ENCODE measurements at regions of chr20 and their contacts with region 1.

Region 1: DNA sequence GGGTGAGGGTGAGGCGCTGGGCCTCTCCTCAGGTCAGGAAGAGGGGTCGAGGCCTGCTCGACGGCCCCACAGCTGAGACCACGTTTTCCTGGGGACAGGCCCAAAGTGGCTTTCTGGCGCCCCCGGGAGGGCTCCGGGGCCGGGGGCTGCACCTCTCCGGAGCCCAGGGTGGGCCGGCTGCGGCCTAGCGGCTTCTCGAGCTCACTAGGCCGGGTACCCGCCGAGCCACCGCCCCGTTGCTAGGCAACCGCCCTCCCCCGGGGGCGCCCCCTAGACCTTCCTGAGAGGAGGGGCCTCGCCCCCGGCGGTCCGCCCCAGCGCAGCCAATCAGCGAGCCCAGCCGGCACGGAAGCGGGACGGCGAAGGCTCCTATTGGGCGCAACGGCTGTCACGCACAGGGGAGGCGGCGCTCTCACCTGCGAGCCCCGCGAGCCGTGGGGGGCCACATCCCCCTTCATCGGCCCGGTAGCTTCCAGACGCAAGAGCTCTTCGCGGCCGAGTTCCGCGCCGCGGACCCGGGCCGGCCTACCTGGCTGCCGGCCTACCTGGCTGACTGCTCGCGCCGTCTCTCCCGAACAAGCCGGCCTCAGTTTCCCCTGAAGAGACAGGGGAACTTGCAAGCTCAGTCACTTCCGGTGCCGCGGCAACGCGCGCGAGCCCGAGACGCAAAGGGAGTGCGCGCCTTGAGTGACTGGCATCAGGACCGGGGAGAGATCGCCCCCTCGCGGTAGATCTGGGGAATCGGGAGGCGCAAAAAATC is 831 bp upstream of the BCL2L1 start:
- DNase-seq: peak; percentile 99
- H3K4me3 ChIP-seq: peak overlapping the region; percentile 95
- H3K27ac ChIP-seq: peak overlapping the region; percentile 89
- H3K4me1 ChIP-seq: peaks cover 21% of the 10 kb centered on the region
- CTCF ChIP-seq: peak; percentile 93

Region 2: DNA sequence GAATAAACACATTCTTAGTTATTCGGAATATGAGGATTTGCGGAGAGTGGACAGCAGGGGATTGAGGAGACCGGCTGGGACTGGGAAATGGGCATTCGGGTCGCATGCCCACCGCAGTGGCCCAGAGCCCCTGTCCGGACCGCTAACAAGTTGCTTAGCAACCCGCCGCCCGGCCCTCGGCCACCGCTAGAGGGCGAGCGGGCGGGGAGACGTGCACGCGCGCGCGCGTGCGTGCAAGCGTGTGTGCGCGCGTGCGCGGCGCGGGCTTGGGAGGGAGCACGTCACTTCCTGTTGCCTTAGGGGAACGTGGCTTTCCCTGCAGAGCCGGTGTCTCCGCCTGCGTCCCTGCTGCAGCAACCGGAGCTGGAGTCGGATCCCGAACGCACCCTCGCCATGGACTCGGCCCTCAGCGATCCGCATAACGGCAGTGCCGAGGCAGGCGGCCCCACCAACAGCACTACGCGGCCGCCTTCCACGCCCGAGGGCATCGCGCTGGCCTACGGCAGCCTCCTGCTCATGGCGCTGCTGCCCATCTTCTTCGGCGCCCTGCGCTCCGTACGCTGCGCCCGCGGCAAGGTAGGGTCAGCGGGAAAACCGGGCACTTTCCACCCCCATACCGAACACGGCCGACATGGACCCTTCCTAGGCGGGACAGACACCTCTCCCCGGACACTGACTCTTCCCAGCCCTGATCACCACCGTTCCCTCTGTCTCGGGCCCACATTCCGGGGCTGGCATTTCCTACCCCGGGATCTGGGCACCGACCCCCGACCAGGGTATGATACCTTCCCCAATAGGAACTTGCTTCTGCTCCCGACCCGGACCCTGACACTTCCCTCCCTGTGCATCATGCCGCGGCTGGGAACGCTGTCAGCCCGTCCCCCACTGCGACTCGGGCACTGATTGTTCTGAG is 209.1 kb before region 1 on chr20 and contains the start of gene HM13:
- CTCF ChIA-PET with region 1: interaction called, 23 read pairs
- POLR2A ChIA-PET with region 1: no interaction called
- intact Hi-C with region 1: no loop called
- DNase-seq: peak; percentile 97
- H3K4me3 ChIP-seq: peak within 1 kb of the TSS; percentile 89
- H3K27ac ChIP-seq: peak within 1 kb of the TSS; percentile 12
- H3K4me1 ChIP-seq: peaks cover 16% of the 10 kb centered on the region
- CTCF ChIP-seq: peak; percentile 87
- total RNA-seq, gene HM13: 43.6 and 51.3 TPM in 2 replicates

Region 3: GRCh38 chr20:31630187-31630790 is 93.2 kb before region 1 on chr20:
- CTCF ChIA-PET with region 1: interaction called, 20 read pairs
- POLR2A ChIA-PET with region 1: interaction called, 11 read pairs
- intact Hi-C with region 1: loop called (anchors 1 kb)
- DNase-seq: peak; percentile 14
- H3K4me3 ChIP-seq: no peak overlapping the region
- H3K27ac ChIP-seq: no peak overlapping the region
- H3K4me1 ChIP-seq: peaks cover 7% of the 10 kb centered on the region
- CTCF ChIP-seq: no peak

Region 4: DNA sequence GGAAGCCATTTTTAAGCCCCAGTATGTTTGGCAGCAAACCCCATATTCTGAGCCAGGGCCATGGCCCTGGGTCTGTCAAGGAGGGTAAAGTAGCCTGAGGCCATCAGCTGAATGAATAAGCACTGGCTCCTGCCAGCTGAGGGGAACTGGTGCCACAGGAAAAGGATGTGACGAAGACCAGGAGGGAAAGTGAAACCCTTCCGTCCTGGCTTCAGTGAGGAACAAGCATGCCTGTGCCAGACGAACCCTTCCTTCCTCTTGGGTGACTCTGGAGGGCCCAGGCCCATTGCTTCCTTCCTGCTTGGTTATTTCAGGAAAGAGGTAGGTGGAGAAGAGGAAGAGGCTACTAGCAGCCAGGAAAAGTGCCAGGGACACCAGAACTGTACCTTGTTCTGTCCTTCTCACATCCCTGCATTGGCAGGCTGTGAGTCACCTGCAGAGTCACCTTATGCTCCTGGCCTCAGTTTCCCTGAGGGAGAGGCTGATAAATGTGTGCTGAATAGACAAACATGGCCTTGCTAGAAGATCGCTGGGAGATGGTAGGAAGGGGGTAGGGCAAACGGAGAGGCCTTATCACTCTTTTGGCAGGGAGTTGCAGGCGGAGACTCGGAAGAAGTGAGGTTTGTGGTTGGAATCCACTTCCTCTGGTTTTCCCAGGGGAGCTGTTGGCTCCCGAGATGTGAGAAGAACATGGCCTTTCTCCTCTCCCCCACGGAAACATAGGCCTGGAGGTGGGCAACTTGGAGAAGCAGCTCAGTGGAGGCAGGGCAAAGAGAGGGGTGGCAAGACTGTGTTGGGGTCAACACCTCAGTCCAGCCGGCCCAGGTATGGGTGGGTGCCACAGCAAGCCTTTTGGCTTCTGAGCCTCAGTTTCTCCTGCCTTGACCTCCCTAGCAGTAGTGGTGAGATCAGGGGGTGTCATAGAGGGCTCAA is 48.3 kb before region 1 on chr20:
- CTCF ChIA-PET with region 1: interaction called, 7 read pairs
- POLR2A ChIA-PET with region 1: interaction called, 11 read pairs
- intact Hi-C with region 1: no loop called
- DNase-seq: peak; percentile 72
- H3K4me3 ChIP-seq: peak overlapping the region; percentile 58
- H3K27ac ChIP-seq: peak overlapping the region; percentile 81
- H3K4me1 ChIP-seq: peaks cover 68% of the 10 kb centered on the region
- CTCF ChIP-seq: no peak

Region 5: GRCh38 chr20:31698803-31699718 is 24.4 kb before region 1 on chr20:
- CTCF ChIA-PET with region 1: interaction called, 10 read pairs
- POLR2A ChIA-PET with region 1: interaction called, 25 read pairs
- intact Hi-C with region 1: no loop called
- DNase-seq: peak; percentile 70
- H3K4me3 ChIP-seq: peak overlapping the region; percentile 37
- H3K27ac ChIP-seq: peak overlapping the region; percentile 58
- H3K4me1 ChIP-seq: peaks cover 48% of the 10 kb centered on the region
- CTCF ChIP-seq: no peak

Region 6: GRCh38 chr20:31712564-31713311 is 10.8 kb before region 1 on chr20:
- CTCF ChIA-PET with region 1: interaction called, 3 read pairs
- POLR2A ChIA-PET with region 1: interaction called, 21 read pairs
- intact Hi-C with region 1: loop called (anchors 1 kb)
- DNase-seq: no peak
- H3K4me3 ChIP-seq: no peak overlapping the region
- H3K27ac ChIP-seq: peak overlapping the region; percentile 2
- H3K4me1 ChIP-seq: peaks cover 95% of the 10 kb centered on the region
- CTCF ChIP-seq: no peak

Region 7: GRCh38 chr20:31845300-31845863 is 121.9 kb after region 1 on chr20 and contains the start of gene FOXS1:
- CTCF ChIA-PET with region 1: no interaction called
- POLR2A ChIA-PET with region 1: no interaction called
- intact Hi-C with region 1: no loop called
- DNase-seq: no peak
- H3K4me3 ChIP-seq: no peak within 1 kb of the TSS
- H3K27ac ChIP-seq: no peak within 1 kb of the TSS
- H3K4me1 ChIP-seq: peaks cover 13% of the 10 kb centered on the region
- CTCF ChIP-seq: no peak
- total RNA-seq, gene FOXS1: not detected in 2 replicates

Region 8: GRCh38 chr20:31908016-31908415 is 184.5 kb after region 1 on chr20:
- CTCF ChIA-PET with region 1: no interaction called
- POLR2A ChIA-PET with region 1: no interaction called
- intact Hi-C with region 1: no loop called
- DNase-seq: no peak
- H3K4me3 ChIP-seq: no peak overlapping the region
- H3K27ac ChIP-seq: no peak overlapping the region
- H3K4me1 ChIP-seq: no peaks in the 10 kb centered on the region
- CTCF ChIP-seq: no peak

Measured in OCI-LY7 (cell line).